ENCODE measurements at regions of chr12 and their contacts with region 1.

Region 1: GRCh38 chr12:112283546-112283945 is 98.7 kb downstream of the HECTD4 start:
- DNase-seq: no peak
- H3K4me3 Mint-ChIP-seq: no peak overlapping the region
- H3K27ac Mint-ChIP-seq: no peak overlapping the region
- H3K4me1 Mint-ChIP-seq: no peaks in the 10 kb centered on the region
- H3K27me3 Mint-ChIP-seq: no peaks in the 10 kb centered on the region

Region 2: DNA sequence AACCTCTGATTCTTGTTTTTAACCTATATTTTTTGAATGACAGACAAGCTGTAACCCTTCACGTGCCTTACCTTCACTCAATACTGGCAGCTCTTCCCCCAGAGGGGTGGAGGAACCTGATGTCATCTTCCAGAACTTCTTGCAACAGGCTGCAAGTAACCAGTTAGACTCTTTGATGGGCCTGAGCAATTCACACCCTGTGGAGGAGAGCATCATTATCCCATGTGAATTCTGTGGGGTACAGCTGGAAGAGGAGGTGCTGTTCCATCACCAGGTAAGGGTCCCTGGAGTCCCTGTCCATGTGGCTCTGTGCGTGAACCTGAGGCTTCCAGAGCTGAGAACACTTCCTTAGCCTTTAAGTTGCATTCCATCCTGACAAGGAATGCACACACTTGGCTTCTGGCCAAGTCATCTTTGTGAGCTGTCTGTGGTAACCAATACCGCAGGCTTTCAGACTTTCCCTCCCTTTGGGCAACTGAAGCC is 135.5 kb before region 1 on chr12:
- intact Hi-C with region 1: no loop called
- DNase-seq: no peak
- H3K4me3 Mint-ChIP-seq: no peak overlapping the region
- H3K27ac Mint-ChIP-seq: no peak overlapping the region
- H3K4me1 Mint-ChIP-seq: peaks cover 4% of the 10 kb centered on the region
- H3K27me3 Mint-ChIP-seq: no peaks in the 10 kb centered on the region

Region 3: DNA sequence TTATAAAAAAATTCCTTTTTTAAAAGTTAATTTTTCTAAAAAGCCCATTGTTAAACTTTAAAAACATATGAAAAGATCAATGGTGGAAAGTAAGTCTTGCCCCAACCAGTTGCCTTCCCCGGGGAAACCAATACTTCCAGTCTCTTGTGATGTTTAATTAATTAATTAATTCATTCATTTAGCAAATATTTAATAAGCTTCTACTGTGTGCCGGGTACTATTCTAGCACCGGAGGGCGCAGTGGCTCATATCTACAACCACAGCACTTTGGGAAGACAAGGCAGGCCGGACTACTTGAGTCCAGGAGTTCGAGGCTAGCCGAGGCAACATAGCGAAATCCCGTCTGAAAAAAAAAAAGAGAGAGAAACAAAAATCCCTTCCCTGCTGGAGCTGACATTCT is 11.2 kb after region 1 on chr12:
- intact Hi-C with region 1: loop called (anchors 1 kb)
- DNase-seq: no peak
- H3K4me3 Mint-ChIP-seq: no peak overlapping the region
- H3K27ac Mint-ChIP-seq: no peak overlapping the region
- H3K4me1 Mint-ChIP-seq: peaks cover 5% of the 10 kb centered on the region
- H3K27me3 Mint-ChIP-seq: no peaks in the 10 kb centered on the region

Measured in activated T-helper 2 cell treated with anti-CD3 and anti-CD28 coated beads, Interferon-gamma antibody, Interleukin-2, Interleukin-4, amounts not matched to agents 10 μg/mL and 5 μg/mL and 100 μg/mL, durations not matched to agents 14 hours and 24 hours and 36 hours (primary cell).